Lower leg skin (tissue), 4 donors: ENCODE measurements at regions of chr6 and their contacts with region 1.

Region 1: DNA sequence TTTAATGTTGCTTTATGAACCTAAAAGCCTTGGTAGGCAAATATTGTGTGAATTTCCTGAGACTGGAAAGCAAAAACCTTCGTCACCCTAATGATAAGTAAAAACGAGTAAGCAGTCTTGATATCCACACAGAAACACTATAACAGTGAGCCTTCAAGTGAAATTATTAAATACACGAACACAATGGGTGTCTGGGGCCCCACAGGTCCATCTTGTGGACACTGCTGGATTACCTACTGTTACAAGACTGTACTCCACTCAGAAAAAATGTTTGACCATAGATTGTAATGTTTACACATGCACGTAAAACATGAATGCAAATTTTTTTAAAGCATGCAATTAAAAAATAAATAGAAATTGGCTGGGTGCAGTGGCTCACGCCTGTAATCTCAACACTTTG is 466.9 kb downstream of the CD83 start:
- DNase-seq: no peak
- H3K4me3 ChIP-seq: no peak overlapping the region
- CTCF ChIP-seq: no peak
- POLR2A ChIP-seq: no peak

Region 2: DNA sequence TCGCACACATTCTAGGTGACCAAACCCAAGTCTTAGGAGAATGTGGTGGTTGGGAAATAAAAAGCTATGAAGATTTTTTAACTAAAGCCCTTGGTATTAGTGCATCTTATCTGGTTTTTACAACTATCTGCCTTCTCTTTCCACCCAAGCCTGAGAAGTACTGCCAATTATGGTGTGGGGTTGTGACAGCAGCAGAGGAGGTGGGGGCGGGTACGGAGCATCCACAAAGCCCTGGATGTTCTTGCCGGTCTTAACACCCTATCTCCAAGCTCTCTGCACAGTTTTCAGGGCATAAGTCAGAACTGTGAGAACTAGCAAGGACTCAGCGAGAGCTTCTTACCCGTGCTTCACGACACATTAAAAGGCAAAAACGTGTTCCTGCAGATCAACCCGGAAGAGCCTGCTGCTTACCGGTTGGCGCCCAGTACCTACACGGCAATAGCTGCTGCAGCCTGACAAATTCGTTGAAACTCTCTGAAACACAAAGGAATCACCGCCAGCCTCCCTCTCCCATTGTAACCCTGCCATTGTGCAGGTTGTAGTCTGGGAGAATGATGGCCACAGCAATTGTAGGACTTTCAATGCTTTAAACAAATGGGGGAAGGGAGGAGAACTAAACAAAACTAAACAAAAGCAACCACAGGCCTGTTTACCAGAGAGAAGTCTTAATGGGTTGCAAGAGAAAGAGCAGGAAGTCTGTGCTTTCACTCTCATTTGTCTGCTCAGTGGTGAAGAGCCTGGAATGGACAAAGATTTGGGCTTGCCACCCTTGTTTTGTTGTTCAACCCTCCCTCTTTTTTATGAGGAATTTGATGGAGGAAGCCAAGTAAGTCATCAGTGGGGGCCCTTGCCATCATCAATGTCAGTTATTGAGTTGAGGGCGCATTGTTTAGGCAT is 200.4 kb after region 1 on chr6:
- intact Hi-C with region 1: no loop called
- DNase-seq: no peak
- H3K4me3 ChIP-seq: no peak overlapping the region
- CTCF ChIP-seq: no peak
- POLR2A ChIP-seq: no peak

Region 3: GRCh38 chr6:16146527-16146955 is 1562.1 kb after region 1 on chr6:
- intact Hi-C with region 1: loop called (anchors 10 kb)
- DNase-seq: no peak
- H3K4me3 ChIP-seq: no peak overlapping the region
- CTCF ChIP-seq: no peak
- POLR2A ChIP-seq: no peak